Mucosa of descending colon (tissue), 3 donors: ENCODE measurements at regions of chr18 and their contacts with region 1.

Region 1: DNA sequence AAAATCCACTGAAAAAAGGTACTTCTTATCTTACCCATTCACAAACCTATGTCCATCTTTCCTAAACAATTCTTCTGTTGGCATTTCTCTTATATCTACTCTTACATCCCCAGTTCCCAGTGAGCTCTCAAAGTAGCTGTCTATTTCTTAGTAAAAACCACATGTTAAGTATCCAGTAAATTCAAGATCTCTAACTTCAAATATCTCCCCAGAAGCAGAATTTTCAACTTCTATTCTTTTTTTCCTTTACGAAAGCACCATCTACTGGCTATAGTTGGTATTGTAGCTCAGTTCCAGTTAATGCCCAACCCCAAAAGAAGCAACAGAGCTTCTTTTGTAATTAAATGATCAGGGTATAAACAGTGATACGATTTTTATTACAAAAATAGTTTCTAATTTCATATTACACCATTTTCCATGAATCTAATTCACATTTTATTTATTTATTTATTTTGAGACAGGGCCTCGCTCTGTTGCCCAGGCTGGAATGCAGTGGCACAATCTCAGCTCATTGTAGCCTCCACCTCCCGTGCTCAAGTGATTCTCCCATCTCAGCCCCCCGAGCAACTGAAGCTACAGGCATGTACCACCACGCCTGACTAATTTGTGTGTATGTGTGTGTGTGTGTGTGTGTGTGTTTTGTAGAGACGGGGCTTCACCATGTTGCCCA is 28.5 kb downstream of the HRH4 start:
- DNase-seq: peak in 1 of 3 donors; percentile 47
- ATAC-seq: peak; percentile 66
- H3K4me3 ChIP-seq: no peak overlapping the region
- H3K4me1 ChIP-seq: peaks cover 3% of the 10 kb centered on the region
- CTCF ChIP-seq: peak; percentile 57

Region 2: GRCh38 chr18:24293254-24293653 is 195.7 kb before region 1 on chr18:
- intact Hi-C with region 1: no loop called
- DNase-seq: no peak
- ATAC-seq: no peak
- H3K4me3 ChIP-seq: no peak overlapping the region
- H3K4me1 ChIP-seq: no peaks in the 10 kb centered on the region
- CTCF ChIP-seq: no peak

Region 3: GRCh38 chr18:24362758-24363157 is 126.2 kb before region 1 on chr18:
- intact Hi-C with region 1: loop called in 1 of 2 experiments (anchors 5 kb)
- DNase-seq: no peak
- ATAC-seq: no peak
- H3K4me3 ChIP-seq: no peak overlapping the region
- H3K4me1 ChIP-seq: no peaks in the 10 kb centered on the region
- CTCF ChIP-seq: no peak